ENCODE measurements at regions of chr7 and their contacts with region 1.

Region 1: GRCh38 chr7:116258734-116259133 is 48.4 kb downstream of the TES start:
- DNase-seq: peak; percentile 50
- H3K4me3 ChIP-seq: no peak overlapping the region
- H3K27ac ChIP-seq: peak overlapping the region; percentile 95
- H3K4me1 ChIP-seq: peaks cover 27% of the 10 kb centered on the region
- H3K27me3 ChIP-seq: no peaks in the 10 kb centered on the region
- CTCF ChIP-seq: peak; percentile 67 to 75

Region 2: DNA sequence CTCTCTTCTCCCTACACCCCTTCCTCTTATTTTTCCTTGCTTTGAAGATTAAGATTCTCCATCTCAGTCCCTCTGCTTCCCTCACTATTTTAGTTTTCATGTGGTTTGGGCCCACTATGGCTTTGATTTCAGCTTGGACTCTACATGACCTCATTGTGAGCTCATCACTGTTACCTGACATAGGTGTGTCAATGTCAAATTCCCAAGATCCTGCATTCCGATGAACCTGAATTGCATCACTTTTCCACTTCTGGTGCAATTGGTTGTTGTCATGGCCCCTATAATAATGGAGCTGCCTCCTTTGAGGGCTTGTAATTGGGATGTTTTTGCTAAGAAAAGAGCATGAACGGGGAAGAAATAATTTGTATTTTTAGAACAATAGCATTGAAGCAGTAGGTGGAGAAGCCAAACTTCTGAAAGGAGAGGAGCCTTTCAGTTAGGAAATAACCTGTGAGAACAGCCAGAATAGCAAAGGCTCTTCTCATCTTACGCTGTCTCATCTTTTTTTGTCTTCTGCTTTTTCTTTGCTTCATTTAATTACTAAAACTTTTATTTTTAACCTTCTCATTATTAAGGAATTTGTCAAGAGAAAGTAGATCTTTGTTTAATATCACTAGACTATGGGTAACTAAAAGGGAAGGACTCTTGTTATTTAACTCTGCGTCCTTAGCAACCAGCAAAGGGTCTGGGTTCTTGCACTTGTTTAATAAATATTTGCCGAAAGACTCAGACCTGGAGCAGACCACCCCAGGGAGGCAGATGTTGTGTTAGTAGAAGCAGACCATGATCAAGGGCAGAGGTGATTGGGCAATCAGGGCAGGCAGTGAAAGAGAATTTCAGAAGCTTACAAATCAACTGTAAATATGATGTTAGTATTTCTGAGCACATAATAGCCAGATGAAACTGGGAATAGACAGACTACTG is 47.0 kb after region 1 on chr7:
- CTCF ChIA-PET with region 1: no interaction called
- dilution Hi-C with region 1: no loop called
- in situ Hi-C with region 1: no loop called
- intact Hi-C with region 1: loop called (anchors 5 kb)
- DNase-seq: peak; percentile 42
- H3K4me3 ChIP-seq: no peak overlapping the region
- H3K27ac ChIP-seq: peak overlapping the region; percentile 57
- H3K4me1 ChIP-seq: peaks cover 5% of the 10 kb centered on the region
- H3K27me3 ChIP-seq: no peaks in the 10 kb centered on the region
- CTCF ChIP-seq: no peak

Region 3: DNA sequence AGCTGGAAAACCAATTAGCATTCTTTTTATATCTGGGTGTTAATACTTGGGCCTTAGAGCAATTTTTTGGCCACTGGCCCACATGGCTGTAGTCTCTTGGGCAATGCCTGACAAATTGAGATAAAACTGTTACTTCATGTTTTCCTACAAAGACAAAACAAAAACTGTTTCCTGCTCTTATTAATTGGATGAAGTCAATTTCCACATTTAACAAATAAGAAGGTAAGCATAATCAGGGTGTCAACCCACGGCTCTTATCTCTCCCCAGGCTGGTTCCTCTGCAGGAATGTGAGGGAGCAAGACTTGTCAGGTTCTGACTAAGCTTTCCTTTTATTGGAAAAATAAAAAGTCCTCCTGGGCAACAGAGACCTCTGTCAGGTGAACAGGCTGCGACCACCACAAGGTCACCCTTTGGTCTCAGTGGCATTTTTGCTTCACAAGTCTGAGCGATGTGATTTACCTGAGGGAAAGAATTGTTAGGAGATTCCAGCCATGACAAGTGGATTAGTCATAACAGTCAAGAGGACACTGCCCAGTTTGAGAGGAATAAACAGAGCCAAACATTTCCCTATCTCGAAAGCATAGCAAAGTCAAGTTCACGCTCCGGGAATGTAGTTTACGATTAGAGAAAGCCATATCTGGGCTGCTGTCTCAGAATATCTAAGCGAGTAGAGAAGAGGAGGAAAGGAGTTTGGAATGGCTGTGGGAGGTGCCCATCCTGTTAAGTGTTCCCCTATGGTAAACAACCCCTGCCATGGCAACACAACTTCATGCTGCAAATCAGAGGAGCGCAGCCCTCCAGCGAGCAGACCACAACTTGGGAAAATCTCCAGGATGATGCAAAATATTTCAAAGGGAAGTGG is 96.0 kb after region 1 on chr7:
- CTCF ChIA-PET with region 1: no interaction called
- dilution Hi-C with region 1: no loop called
- in situ Hi-C with region 1: no loop called
- intact Hi-C with region 1: loop called (anchors 1 kb)
- DNase-seq: peak; percentile 98
- H3K4me3 ChIP-seq: peak overlapping the region; percentile 26 to 42 (median 31)
- H3K27ac ChIP-seq: peak overlapping the region; percentile 100
- H3K4me1 ChIP-seq: peaks cover 53% of the 10 kb centered on the region
- H3K27me3 ChIP-seq: no peaks in the 10 kb centered on the region
- CTCF ChIP-seq: no peak

Region 4: DNA sequence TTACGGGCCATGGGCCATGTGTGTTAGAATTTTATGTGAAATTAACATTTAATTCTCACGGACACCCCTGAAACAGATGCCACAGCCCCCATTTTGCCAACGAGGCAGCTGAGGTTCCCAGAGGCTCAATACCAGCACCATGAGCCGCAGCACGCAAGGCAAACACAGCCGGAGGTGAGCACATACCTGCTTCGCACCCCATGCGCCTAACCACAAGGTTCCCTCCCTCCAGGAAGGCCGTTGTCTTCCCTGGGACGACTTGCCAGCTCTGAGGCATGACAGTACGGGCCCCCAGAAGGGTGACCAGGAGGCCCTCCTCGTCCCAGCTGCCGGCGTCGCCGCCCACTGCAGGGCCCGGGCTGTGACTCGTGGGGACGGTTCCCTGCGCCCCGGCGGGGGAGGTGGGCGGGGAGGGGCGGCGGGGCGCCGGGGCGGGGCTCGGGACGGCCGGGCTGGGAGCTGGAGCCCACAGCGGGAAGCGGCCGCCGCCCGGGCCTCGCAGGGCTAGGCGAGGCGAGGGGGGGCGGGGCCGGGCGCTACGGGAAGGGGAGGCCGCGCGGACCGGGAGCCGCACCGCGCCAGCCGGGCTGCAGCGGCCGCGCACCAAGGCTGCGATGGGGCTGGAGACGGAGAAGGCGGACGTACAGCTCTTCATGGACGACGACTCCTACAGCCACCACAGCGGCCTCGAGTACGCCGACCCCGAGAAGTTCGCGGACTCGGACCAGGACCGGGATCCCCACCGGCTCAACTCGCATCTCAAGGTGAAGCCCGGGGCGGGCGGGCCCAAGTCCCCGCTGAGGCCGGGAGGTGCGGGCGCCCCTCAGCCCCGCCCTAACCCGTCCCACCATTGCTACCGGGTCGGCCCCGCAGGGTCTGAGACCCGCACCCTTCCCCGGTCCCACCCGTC is 240.7 kb after region 1 on chr7 and contains the start of gene CAV2:
- CTCF ChIA-PET with region 1: interaction called, 5 read pairs
- dilution Hi-C with region 1: no loop called
- in situ Hi-C with region 1: loop called in 1 of 2 experiments (anchors 5 kb)
- intact Hi-C with region 1: loop called (anchors 1 kb)
- DNase-seq: peak; percentile 96
- H3K4me3 ChIP-seq: peak within 1 kb of the TSS; percentile 59 to 98 (median 80)
- H3K27ac ChIP-seq: peak within 1 kb of the TSS; percentile 99
- H3K4me1 ChIP-seq: peaks cover 34% of the 10 kb centered on the region
- H3K27me3 ChIP-seq: no peaks in the 10 kb centered on the region
- CTCF ChIP-seq: no peak
- total RNA-seq, gene CAV2: 253 to 385 TPM

Region 5: GRCh38 chr7:116588641-116589594 is 330.2 kb after region 1 on chr7:
- CTCF ChIA-PET with region 1: interaction called, 4 read pairs
- dilution Hi-C with region 1: loop called (anchors 5 kb)
- in situ Hi-C with region 1: no loop called
- intact Hi-C with region 1: loop called (anchors 1 kb)
- DNase-seq: peak; percentile 44
- H3K4me3 ChIP-seq: no peak overlapping the region
- H3K27ac ChIP-seq: peak overlapping the region; percentile 32
- H3K4me1 ChIP-seq: peaks cover 16% of the 10 kb centered on the region
- H3K27me3 ChIP-seq: no peaks in the 10 kb centered on the region
- CTCF ChIP-seq: peak; percentile 45 to 57

Measured in mammary epithelial cell (primary cell).